Cardiac septum (tissue), 1 donor: ENCODE measurements at regions of chr11 and their contacts with region 1.

Region 1: DNA sequence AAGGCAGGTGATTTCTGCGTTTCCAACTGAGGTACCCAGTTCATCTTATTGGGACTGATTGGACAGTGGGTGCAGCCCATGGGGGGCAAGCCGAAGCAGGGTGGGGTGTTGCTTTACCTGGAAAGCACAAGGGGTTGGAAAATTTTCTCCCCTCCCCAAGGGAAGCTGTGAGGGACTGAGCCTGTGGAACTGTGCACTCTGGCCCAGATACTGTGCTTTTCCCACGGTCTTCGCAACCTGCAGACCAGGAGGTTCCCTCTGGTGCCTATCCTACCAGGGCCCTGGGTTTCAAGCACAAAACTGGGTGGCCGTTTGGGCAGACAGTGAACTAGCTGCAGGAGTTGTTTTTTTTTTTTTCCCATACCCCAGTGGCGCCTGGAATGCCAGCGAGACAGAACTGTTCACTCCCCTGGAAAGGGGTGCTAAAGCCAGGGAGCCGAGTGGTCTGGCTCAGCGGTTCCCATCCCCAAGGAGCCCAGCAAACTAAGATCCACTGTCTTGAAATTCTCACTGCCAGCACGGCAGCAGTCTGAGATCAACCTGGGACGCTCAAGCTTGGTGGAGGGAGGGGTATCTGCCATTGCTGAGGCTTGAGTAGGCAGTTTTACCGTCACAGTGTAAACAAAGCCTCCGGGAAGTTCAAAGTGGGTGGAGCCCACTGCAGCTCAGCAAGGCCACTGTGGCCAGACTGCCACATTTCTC is 97.2 kb downstream of the JRKL start:
- DNase-seq: no peak

Region 2: GRCh38 chr11:96388891-96389719 is 97.9 kb before region 1 on chr11:
- intact Hi-C with region 1: no loop called
- DNase-seq: no peak

Region 3: DNA sequence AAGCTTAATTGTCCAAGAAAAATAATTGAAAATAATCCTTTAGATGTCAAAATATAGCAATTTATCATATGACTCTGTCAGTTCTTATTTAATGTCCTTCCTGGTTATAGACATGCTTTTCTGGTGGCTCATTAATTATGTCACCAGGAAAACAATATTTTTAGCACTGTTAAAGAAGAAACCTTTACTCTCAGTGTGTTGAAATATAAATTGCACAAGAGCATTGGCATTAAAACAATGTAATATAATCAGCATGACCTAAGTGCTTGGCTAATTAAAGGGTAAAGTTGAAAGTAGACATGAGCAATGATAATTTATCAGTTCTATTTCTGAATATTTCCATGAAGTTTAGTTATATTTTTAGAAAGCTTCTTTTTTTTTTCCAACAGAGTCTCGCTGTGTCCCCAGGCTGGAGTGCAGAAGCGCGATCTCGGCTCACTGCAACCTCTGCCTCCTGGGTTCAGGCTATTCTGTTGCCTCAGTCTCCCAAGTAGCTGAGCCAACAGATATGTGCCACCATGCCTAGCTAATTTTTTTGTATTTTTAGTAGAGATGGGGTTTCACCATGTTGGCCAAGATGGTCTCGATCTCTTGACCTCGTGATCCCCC is 135.1 kb after region 1 on chr11:
- intact Hi-C with region 1: loop called (anchors 10 kb)
- DNase-seq: no peak